PC-3 (cell line): ENCODE measurements at regions of chr6 and their contacts with region 1.

Region 1: DNA sequence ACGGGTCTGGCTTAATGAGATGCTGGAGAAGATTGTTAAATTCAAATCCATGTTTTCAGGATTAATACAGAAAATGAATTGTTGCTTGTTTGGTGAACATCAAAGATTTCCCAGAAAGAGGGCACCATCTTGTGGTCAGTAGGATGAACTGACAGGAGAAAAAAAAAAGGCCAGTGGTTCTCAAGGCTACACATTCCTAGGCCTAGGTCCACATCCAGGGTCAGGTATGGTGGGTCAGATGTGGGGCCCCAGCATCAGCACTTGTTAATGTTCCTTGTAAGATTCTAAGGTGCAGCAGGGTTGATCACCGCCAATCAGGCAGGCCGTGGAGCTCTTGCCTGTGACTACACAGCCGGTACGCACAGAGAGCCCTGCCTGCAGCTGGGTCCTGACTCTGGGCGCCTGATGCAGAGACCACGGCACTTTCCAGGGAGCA is 34.0 kb upstream of the FOXO3 start:
- DNase-seq: peak; percentile 58
- ATAC-seq: no peak
- H3K4me3 ChIP-seq: no peak overlapping the region
- H3K27ac ChIP-seq: no peak overlapping the region
- H3K4me1 ChIP-seq: no peaks in the 10 kb centered on the region
- H3K27me3 ChIP-seq: no peaks in the 10 kb centered on the region
- CTCF ChIP-seq: peak; percentile 74

Region 2: DNA sequence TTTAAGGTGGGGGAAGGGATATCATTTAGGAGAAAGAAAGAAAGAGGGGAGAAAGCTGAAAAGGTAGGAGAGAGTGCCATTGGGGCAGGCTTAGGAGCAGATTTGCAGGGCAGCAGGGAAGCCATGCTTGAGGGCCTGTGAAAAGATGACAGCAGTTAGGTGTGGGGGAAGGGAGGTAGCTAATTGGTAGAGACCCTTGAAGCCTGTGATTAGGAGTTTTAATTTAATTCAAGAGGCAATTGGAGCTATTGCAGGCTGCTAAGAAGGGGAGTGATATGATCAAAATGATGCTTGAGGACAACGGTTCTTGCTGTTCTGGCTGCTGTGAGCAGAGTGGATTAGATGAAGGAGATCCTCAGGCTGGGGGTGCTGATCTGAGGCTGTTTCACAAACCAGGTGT is 544.3 kb before region 1 on chr6:
- CTCF ChIA-PET with region 1: interaction called, 3 read pairs
- POLR2A ChIA-PET with region 1: no interaction called
- intact Hi-C with region 1: loop called (anchors 5 kb)
- DNase-seq: no peak
- ATAC-seq: no peak
- H3K4me3 ChIP-seq: no peak overlapping the region
- H3K27ac ChIP-seq: no peak overlapping the region
- H3K4me1 ChIP-seq: no peaks in the 10 kb centered on the region
- H3K27me3 ChIP-seq: no peaks in the 10 kb centered on the region
- CTCF ChIP-seq: no peak